MCF 10A (cell line): ENCODE measurements at regions of chr9 and their contacts with region 1.

Region 1: GRCh38 chr9:7402334-7403027 is 397.1 kb downstream of the DMAC1 start:
- DNase-seq: no peak
- H3K4me3 Mint-ChIP-seq: no peak overlapping the region
- H3K27ac Mint-ChIP-seq: no peak overlapping the region
- H3K4me1 Mint-ChIP-seq: peaks cover 11% of the 10 kb centered on the region
- H3K27me3 Mint-ChIP-seq: no peaks in the 10 kb centered on the region
- CTCF ChIP-seq: no peak

Region 2: GRCh38 chr9:7058473-7058872 is 344.0 kb before region 1 on chr9:
- CTCF ChIA-PET with region 1: interaction called, 5 read pairs
- POLR2A ChIA-PET with region 1: no interaction called
- intact Hi-C with region 1: loop called (anchors 5 kb)
- DNase-seq: no peak
- H3K4me3 Mint-ChIP-seq: no peak overlapping the region
- H3K27ac Mint-ChIP-seq: no peak overlapping the region
- H3K4me1 Mint-ChIP-seq: no peaks in the 10 kb centered on the region
- H3K27me3 Mint-ChIP-seq: no peaks in the 10 kb centered on the region
- CTCF ChIP-seq: no peak

Region 3: DNA sequence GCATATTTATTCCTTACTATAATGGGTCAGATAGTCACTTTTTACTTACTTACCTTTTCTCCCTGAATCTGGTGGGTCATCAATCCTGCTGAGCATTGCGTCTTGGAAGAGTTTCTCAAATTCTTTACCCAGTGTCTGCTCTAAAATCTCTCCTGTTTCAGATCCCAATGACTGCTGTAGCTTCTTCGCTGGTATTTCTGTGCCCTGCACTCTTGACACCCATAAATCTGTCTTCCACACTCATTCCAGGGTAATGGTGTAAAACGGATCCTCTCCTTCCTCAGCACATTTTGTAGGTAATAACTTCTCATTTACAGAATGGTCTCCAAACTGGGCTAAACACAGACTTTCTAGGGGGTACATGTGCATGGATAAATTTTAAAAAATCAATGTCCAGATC is 10.3 kb before region 1 on chr9:
- CTCF ChIA-PET with region 1: interaction called, 11 read pairs
- POLR2A ChIA-PET with region 1: interaction called, 3 read pairs
- intact Hi-C with region 1: no loop called
- DNase-seq: no peak
- H3K4me3 Mint-ChIP-seq: no peak overlapping the region
- H3K27ac Mint-ChIP-seq: no peak overlapping the region
- H3K4me1 Mint-ChIP-seq: no peaks in the 10 kb centered on the region
- H3K27me3 Mint-ChIP-seq: peaks cover 45% of the 10 kb centered on the region
- CTCF ChIP-seq: no peak

Region 4: DNA sequence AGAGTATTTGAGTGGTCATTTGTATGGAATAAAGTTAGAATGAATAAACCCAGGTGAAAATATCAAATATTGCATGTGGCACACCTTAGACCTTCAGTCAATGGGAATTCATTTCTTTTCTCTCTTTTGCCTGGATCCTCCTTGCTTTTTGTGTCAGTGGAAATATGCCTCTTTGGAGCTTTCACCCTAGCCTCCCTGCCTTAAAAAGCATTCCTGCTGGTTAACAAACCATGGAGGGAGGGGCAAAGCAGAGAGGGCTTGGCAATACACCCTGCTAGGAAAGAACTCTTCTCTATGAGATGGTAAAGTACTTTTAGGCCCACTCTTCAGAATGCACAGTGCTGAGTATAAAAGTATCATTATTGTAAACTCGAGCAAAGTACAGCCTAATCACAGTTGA is 13.4 kb after region 1 on chr9:
- CTCF ChIA-PET with region 1: interaction called, 32 read pairs
- POLR2A ChIA-PET with region 1: interaction called, 3 read pairs
- intact Hi-C with region 1: no loop called
- DNase-seq: no peak
- H3K4me3 Mint-ChIP-seq: no peak overlapping the region
- H3K27ac Mint-ChIP-seq: no peak overlapping the region
- H3K4me1 Mint-ChIP-seq: no peaks in the 10 kb centered on the region
- H3K27me3 Mint-ChIP-seq: no peaks in the 10 kb centered on the region
- CTCF ChIP-seq: no peak

Region 5: GRCh38 chr9:7479300-7479699 is 76.8 kb after region 1 on chr9:
- CTCF ChIA-PET with region 1: interaction called, 16 read pairs
- POLR2A ChIA-PET with region 1: no interaction called
- intact Hi-C with region 1: no loop called
- DNase-seq: peak; percentile 8
- H3K4me3 Mint-ChIP-seq: no peak overlapping the region
- H3K27ac Mint-ChIP-seq: no peak overlapping the region
- H3K4me1 Mint-ChIP-seq: no peaks in the 10 kb centered on the region
- H3K27me3 Mint-ChIP-seq: no peaks in the 10 kb centered on the region
- CTCF ChIP-seq: peak; percentile 15

Region 6: DNA sequence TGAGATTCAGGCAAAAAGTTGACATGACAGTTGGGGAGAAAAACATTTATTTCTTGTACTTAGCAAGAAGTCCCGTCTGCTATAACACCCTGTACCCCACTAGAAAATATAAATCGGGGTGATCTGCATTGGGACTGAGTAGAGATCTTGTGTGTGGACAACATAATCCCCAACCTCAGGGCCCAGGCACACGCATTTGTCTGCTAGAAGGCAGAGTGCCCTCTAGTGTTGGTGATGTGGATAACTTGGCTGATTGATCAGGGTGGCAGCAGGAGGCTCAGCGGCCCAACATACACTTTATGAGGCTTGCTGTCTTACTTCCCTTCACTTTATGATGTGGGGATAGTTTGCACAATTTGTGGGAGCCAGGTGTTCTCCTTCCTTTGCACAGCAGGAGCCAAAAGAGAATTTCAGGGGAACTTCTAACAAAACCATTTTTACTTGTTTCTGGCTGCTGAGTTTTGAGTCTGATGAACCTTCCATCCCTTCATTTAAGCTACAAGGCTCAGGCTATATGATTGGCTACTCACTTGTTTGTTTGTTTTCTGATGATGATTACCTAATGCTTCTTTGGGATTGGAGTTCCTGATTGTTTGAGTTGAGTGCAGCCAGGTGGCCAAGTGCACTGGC is 133.9 kb after region 1 on chr9:
- CTCF ChIA-PET with region 1: interaction called, 28 read pairs
- POLR2A ChIA-PET with region 1: no interaction called
- intact Hi-C with region 1: loop called (anchors 1 kb)
- DNase-seq: peak; percentile 75
- H3K4me3 Mint-ChIP-seq: no peak overlapping the region
- H3K27ac Mint-ChIP-seq: no peak overlapping the region
- H3K4me1 Mint-ChIP-seq: no peaks in the 10 kb centered on the region
- H3K27me3 Mint-ChIP-seq: peaks cover 19% of the 10 kb centered on the region
- CTCF ChIP-seq: peak; percentile 68

Region 7: GRCh38 chr9:7542156-7542555 is 139.7 kb after region 1 on chr9:
- CTCF ChIA-PET with region 1: interaction called, 28 read pairs
- POLR2A ChIA-PET with region 1: no interaction called
- intact Hi-C with region 1: no loop called
- DNase-seq: no peak
- H3K4me3 Mint-ChIP-seq: no peak overlapping the region
- H3K27ac Mint-ChIP-seq: no peak overlapping the region
- H3K4me1 Mint-ChIP-seq: no peaks in the 10 kb centered on the region
- H3K27me3 Mint-ChIP-seq: peaks cover 59% of the 10 kb centered on the region
- CTCF ChIP-seq: no peak

Region 8: GRCh38 chr9:8374471-8374870 is 972.0 kb after region 1 on chr9:
- CTCF ChIA-PET with region 1: no interaction called
- POLR2A ChIA-PET with region 1: no interaction called
- intact Hi-C with region 1: no loop called
- DNase-seq: no peak
- H3K4me3 Mint-ChIP-seq: no peak overlapping the region
- H3K27ac Mint-ChIP-seq: no peak overlapping the region
- H3K4me1 Mint-ChIP-seq: no peaks in the 10 kb centered on the region
- H3K27me3 Mint-ChIP-seq: no peaks in the 10 kb centered on the region
- CTCF ChIP-seq: no peak